Activated CD4-positive, alpha-beta T cell treated with anti-CD3 and anti-CD28 coated beads, Interleukin-2, amount 10 ng/mL, durations not matched to agents 7 days and 5 days (primary cell): ENCODE measurements at regions of chr11 and their contacts with region 1.

Region 1: DNA sequence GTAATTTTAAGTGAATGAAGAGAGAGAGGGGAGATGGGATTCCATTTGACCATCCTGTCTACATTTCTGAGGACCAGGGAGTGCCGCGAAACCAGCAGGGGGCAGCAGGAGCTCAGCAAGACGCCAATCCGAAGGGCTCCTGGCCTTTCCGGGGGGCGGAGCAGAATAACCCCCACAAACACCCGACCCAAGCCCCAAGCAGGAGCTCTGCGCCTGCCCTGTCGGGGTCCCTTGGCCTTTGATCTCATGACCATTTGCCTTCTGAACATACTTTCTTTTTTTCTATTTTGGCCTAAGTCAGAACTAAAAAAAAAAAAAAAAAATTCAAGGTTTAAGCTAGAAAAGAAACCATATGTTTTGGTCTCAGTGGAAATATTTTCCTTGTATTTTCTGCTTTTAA is 21.9 kb upstream of the SCN2B start:
- DNase-seq: peak; percentile 85
- H3K4me3 Mint-ChIP-seq: no peak overlapping the region
- H3K27ac Mint-ChIP-seq: peak overlapping the region; percentile 58
- H3K4me1 Mint-ChIP-seq: peaks cover 14% of the 10 kb centered on the region
- H3K27me3 Mint-ChIP-seq: no peaks in the 10 kb centered on the region

Region 2: DNA sequence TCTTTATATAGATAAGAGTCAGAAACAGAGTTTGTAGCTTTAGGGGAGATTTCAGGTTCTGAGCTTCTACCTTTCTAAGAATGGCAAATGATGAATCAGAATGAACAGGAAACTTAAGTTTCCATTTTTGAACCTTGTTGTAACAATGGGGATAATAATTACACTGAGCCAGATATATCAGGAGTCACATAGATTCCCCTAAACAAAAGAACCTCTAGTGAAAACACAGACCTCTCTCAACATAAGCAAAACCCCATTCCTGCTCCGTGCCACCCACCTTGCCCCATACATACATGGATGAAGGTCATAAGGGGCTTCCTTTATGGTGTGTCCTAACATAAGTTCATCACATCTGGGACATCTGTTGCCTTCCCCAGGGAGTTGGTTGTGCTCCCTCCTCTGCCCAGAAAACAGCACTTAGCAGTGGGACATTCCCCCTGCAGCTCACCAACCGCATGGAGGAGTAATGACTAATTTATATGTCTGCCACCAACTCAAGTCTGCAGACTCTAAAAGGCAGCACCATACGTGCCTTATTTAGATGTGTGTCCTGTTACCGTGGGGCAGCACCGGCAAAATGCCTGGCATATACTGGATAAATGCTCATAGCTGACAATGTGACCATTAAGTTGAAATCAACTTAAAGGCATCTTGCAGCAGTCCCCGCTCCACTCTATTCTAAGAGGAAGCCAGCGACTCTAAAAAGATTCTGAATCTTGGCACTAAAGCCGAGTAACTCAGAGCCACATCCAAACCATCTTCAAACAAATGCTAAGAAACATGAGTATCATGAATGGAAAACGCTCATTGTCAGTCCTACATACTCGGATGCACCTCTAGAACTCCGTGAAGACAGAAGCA is 18.5 kb after region 1 on chr11:
- CTCF ChIA-PET with region 1: interaction called, 28 read pairs
- POLR2A ChIA-PET with region 1: interaction called, 7 read pairs
- DNase-seq: peak; percentile 49
- H3K4me3 Mint-ChIP-seq: peak overlapping the region; percentile 72
- H3K27ac Mint-ChIP-seq: peak overlapping the region; percentile 95
- H3K4me1 Mint-ChIP-seq: peaks cover 96% of the 10 kb centered on the region
- H3K27me3 Mint-ChIP-seq: no peaks in the 10 kb centered on the region

Region 3: DNA sequence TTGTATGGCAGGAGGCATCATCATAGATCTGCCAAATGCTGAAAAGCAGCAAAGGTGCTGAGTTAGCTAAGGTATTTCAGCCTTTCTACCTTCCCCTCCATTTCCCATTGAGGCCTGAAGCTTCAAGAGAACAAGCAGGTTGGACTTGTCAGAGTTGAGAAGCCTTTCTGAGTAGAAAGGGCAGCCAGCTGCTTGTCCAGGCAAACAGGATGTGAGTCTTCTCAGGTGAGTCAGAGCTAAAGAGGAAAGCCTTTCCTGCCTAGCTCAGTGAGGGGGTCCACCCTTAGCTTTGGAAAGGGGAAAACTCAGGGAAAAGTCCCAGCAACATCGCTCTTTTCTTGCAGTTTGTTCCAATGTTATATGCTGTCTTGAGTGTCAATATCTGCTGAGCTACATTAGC is 78.9 kb after region 1 on chr11:
- CTCF ChIA-PET with region 1: interaction called, 10 read pairs
- POLR2A ChIA-PET with region 1: no interaction called
- DNase-seq: peak; percentile 19
- H3K4me3 Mint-ChIP-seq: no peak overlapping the region
- H3K27ac Mint-ChIP-seq: peak overlapping the region; percentile 42
- H3K4me1 Mint-ChIP-seq: peaks cover 45% of the 10 kb centered on the region
- H3K27me3 Mint-ChIP-seq: peaks cover 2% of the 10 kb centered on the region

Region 4: DNA sequence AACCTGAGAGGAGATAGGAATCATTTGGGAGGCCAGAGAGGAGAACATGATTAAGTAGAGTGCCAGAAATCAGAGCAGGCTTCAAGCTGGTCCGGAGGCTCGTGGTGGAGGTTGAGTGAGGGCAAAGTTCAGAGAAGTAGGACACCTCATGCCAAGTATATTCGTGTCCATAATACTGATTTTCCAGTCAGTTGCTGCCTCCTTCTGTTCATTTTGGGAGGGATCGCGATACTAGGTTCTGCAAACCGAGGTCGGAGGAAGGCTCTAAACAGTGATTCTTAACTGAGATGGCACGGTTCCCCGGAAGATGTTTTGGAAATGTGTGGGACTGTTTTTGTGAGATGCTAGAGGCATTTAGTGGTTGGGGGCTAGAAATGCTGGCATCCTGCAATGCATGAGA is 92.6 kb after region 1 on chr11:
- CTCF ChIA-PET with region 1: interaction called, 18 read pairs
- POLR2A ChIA-PET with region 1: interaction called, 4 read pairs
- DNase-seq: peak; percentile 63
- H3K4me3 Mint-ChIP-seq: no peak overlapping the region
- H3K27ac Mint-ChIP-seq: no peak overlapping the region
- H3K4me1 Mint-ChIP-seq: peaks cover 19% of the 10 kb centered on the region
- H3K27me3 Mint-ChIP-seq: no peaks in the 10 kb centered on the region

Region 5: GRCh38 chr11:118295834-118296454 is 97.6 kb after region 1 on chr11:
- CTCF ChIA-PET with region 1: interaction called, 18 read pairs
- POLR2A ChIA-PET with region 1: interaction called, 4 read pairs
- DNase-seq: peak; percentile 52
- H3K4me3 Mint-ChIP-seq: no peak overlapping the region
- H3K27ac Mint-ChIP-seq: peak overlapping the region; percentile 67
- H3K4me1 Mint-ChIP-seq: peaks cover 25% of the 10 kb centered on the region
- H3K27me3 Mint-ChIP-seq: no peaks in the 10 kb centered on the region

Region 6: GRCh38 chr11:118304568-118305248 is 106.3 kb after region 1 on chr11 and contains the start of gene CD3E:
- CTCF ChIA-PET with region 1: interaction called, 11 read pairs
- POLR2A ChIA-PET with region 1: interaction called, 3 read pairs
- DNase-seq: peak; percentile 84
- H3K4me3 Mint-ChIP-seq: peak within 1 kb of the TSS; percentile 99
- H3K27ac Mint-ChIP-seq: peak within 1 kb of the TSS; percentile 99
- H3K4me1 Mint-ChIP-seq: peaks cover 75% of the 10 kb centered on the region
- H3K27me3 Mint-ChIP-seq: no peaks in the 10 kb centered on the region
- total RNA-seq, gene CD3E: 680 to 841 TPM

Region 7: DNA sequence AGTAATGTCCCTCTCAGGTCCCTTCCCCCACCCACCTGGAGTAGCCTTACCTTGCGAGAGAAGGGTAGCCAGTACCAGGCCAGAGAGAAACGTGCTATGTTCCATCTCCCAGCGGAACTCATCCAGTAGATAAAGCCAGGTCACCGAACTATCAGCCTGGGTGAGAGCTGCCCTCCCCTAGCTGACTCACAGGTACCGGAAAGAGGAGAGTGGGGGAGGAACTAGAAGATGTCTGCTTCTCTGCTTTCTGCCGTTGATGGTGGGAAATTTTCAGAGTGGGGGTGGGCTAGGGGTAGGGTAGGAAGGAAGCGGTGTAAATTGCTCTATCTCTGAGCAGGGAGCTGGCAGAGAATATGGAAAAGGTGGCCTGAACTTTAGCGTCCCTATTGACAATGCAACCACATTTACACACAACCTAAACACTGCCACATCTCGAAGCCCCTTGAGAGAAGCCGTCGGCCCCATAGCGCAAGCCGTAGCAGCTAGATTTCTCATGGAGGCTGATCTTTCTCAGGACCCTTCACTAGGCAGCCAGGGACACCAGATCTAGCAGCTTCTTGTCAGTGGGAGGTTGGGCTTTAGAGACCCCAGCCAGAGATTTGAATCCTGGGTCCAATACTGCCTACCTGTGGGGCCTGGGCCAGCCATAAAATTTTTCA is 144.3 kb after region 1 on chr11 and contains the start of gene CD3D:
- CTCF ChIA-PET with region 1: interaction called, 24 read pairs
- POLR2A ChIA-PET with region 1: no interaction called
- DNase-seq: peak; percentile 77
- H3K4me3 Mint-ChIP-seq: peak within 1 kb of the TSS; percentile 94
- H3K27ac Mint-ChIP-seq: peak within 1 kb of the TSS; percentile 98
- H3K4me1 Mint-ChIP-seq: peaks cover 65% of the 10 kb centered on the region
- H3K27me3 Mint-ChIP-seq: no peaks in the 10 kb centered on the region
- total RNA-seq, gene CD3D: 489 to 557 TPM